HepG2 (cell line): ENCODE measurements at regions of chr5 and their contacts with region 1.

Region 1: GRCh38 chr5:177497292-177498033 is at the start of gene PDLIM7:
- DNase-seq: peak; percentile 94
- ATAC-seq: peak; percentile 77
- H3K4me3 ChIP-seq: peak within 1 kb of the TSS; percentile 65 to 85 (median 68)
- H3K27ac ChIP-seq: peak within 1 kb of the TSS; percentile 75
- H3K4me1 ChIP-seq: peaks cover 57% of the 10 kb centered on the region
- H3K27me3 ChIP-seq: peaks cover 0 to 29% of the 10 kb centered on the region in 2 experiments; a peak in 3 of 5 replicates
- CTCF ChIP-seq: peak; percentile 27; the same call in 1 of the 2 replicates
- EP300 ChIP-seq: no peak
- POLR2A ChIP-seq: peak in 1 of 2 experiments; percentile 87; a peak in 2 of 4 replicates
- RAD21 ChIP-seq: no peak
- total RNA-seq, gene PDLIM7: 17.7 and 21.1 TPM in 2 replicates

Region 2: DNA sequence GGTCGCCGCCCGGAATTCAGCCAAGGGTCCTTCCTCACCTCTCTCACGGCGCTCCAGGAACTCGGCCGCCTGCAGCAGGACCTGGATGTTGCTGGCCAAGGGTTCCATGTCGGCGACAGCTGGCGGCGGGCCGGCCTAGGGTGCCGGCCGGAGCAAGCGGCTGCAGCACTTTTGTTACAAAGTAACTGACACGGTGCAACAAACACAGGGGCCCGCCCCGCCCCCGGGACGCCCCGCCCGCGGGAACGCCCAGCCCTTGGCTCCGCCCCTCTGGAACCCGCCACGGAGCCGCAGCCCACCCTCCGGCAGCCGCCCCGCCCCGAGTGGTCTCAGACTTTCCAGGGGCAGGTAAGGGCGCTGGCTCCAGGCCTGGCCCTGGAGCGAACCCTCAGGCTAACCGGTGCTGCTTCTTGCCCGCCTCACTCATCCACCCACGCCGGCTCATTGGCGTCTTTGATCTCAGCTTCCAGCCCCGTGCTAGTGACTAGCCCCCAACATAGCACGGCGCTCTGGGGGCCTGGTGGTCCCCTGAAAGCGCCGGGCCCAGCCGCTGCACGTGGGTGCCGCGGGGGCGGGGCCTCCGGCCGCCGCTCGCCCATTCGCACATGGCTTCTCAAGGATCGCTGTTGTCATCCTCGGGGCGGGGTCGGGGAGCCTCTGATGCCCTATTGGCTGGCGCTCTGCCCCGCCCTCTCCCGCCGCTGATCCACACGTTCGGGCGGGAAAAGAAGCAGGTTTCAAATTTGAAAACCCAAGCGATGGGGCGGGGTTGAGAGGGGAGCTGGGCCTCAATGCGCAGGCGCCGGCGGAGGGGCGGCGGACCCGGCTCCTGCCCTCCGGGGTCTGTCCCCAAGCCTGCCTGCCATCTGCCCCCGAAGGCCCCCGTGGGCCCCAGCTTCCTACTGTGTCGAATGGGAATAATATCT is 185.5 kb before region 1 on chr5 and contains the start of gene MXD3:
- CTCF ChIA-PET with region 1: no interaction called
- POLR2A ChIA-PET with region 1: interaction called, 3 read pairs
- in situ Hi-C with region 1: no loop called
- intact Hi-C with region 1: loop called (anchors 5 kb)
- DNase-seq: peak; percentile 94
- ATAC-seq: peak; percentile 71
- H3K4me3 ChIP-seq: peak within 1 kb of the TSS; percentile 63 to 79 (median 75)
- H3K27ac ChIP-seq: peak within 1 kb of the TSS; percentile 95
- H3K4me1 ChIP-seq: peaks cover 51% of the 10 kb centered on the region
- H3K27me3 ChIP-seq: no peaks in the 10 kb centered on the region
- CTCF ChIP-seq: no peak
- EP300 ChIP-seq: peak in 1 of 2 experiments; percentile 34; a peak in 1 of 4 replicates
- POLR2A ChIP-seq: peak in 1 of 2 experiments; percentile 46; a peak in 1 of 4 replicates
- RAD21 ChIP-seq: no peak
- total RNA-seq, gene MXD3: 9.9 and 12.8 TPM in 2 replicates

Region 3: GRCh38 chr5:177390363-177391300 is 106.8 kb before region 1 on chr5:
- CTCF ChIA-PET with region 1: interaction called, 9 read pairs
- POLR2A ChIA-PET with region 1: interaction called, 7 read pairs
- in situ Hi-C with region 1: no loop called
- intact Hi-C with region 1: loop called (anchors 1 kb)
- DNase-seq: peak; percentile 79
- ATAC-seq: peak; percentile 79
- H3K4me3 ChIP-seq: no peak overlapping the region; a peak in 1 of 6 replicates
- H3K27ac ChIP-seq: no peak overlapping the region
- H3K4me1 ChIP-seq: peaks cover 38% of the 10 kb centered on the region
- H3K27me3 ChIP-seq: peaks cover 4 to 47% of the 10 kb centered on the region in 2 experiments; a peak in 4 of 5 replicates
- CTCF ChIP-seq: peak; percentile 96
- EP300 ChIP-seq: no peak
- POLR2A ChIP-seq: no peak
- RAD21 ChIP-seq: peak; percentile 94

Region 4: DNA sequence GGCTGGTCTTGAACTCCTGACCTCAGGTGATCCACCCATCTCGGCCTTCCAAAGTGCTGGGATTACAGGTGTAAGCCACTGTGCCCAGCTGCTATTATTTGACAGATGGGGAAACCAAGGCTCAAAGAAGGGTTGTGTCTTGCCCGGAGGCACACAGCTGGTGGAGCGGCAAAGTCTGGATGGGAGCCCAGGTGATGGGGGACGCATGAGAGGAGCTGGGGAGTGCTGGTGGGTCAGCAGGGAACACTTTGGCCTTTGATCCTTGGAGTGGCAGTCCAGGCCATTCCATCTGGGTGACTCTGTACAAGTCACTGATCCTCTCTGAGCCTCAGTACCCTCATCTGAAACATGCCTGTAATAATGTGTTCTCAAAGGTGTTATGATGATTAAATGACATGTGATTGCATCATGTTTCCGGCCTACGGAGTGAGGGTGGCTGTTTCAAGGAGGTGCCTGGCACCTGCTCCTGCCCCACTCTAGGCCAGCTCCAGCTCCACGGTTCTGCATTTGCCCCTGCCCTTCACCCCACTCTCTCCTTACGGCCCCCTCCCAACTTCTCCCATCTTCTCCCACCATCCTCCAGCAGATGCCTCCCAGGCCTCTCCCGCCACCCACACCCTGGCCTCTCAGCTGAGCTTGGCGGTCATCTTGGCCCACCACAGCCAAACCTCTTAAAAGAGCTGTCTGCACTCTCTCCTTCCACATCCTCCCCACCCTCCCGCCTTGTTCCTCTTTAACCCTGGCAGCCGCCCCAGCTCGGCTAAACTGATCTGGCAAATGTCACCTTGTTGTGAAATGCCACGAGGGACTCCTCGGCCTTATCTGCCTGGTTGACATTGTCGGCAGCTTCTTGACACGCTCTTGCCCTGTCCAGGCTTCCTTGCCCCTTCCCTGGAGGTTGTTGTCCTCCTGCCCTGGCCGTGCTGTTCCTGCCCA is 18.5 kb before region 1 on chr5:
- CTCF ChIA-PET with region 1: no interaction called
- POLR2A ChIA-PET with region 1: interaction called, 42 read pairs
- in situ Hi-C with region 1: no loop called
- intact Hi-C with region 1: no loop called
- DNase-seq: no peak
- ATAC-seq: peak; percentile 5; the same call in 1 of the 3 replicates
- H3K4me3 ChIP-seq: no peak overlapping the region
- H3K27ac ChIP-seq: no peak overlapping the region
- H3K4me1 ChIP-seq: peaks cover 54% of the 10 kb centered on the region
- H3K27me3 ChIP-seq: no peaks in the 10 kb centered on the region
- CTCF ChIP-seq: no peak
- EP300 ChIP-seq: no peak
- POLR2A ChIP-seq: no peak
- RAD21 ChIP-seq: no peak

Region 5: GRCh38 chr5:177516604-177517568 is 19.4 kb after region 1 on chr5 and contains the start of gene DDX41:
- CTCF ChIA-PET with region 1: no interaction called
- POLR2A ChIA-PET with region 1: interaction called, 18 read pairs
- in situ Hi-C with region 1: no loop called
- intact Hi-C with region 1: no loop called
- DNase-seq: peak; percentile 96
- ATAC-seq: peak; percentile 88
- H3K4me3 ChIP-seq: peak within 1 kb of the TSS; percentile 70 to 96 (median 86)
- H3K27ac ChIP-seq: peak within 1 kb of the TSS; percentile 62
- H3K4me1 ChIP-seq: peaks cover 26% of the 10 kb centered on the region
- H3K27me3 ChIP-seq: no peaks in the 10 kb centered on the region; a peak in 1 of 5 replicates
- CTCF ChIP-seq: peak; percentile 21; the same call in 1 of the 2 replicates
- EP300 ChIP-seq: peak in 1 of 2 experiments; percentile 17; a peak in 1 of 4 replicates
- POLR2A ChIP-seq: peak in 1 of 2 experiments; percentile 48; a peak in 1 of 4 replicates
- RAD21 ChIP-seq: peak; percentile 48; the same call in 1 of the 2 replicates
- total RNA-seq, gene DDX41: 62.8 and 83.0 TPM in 2 replicates

Region 6: DNA sequence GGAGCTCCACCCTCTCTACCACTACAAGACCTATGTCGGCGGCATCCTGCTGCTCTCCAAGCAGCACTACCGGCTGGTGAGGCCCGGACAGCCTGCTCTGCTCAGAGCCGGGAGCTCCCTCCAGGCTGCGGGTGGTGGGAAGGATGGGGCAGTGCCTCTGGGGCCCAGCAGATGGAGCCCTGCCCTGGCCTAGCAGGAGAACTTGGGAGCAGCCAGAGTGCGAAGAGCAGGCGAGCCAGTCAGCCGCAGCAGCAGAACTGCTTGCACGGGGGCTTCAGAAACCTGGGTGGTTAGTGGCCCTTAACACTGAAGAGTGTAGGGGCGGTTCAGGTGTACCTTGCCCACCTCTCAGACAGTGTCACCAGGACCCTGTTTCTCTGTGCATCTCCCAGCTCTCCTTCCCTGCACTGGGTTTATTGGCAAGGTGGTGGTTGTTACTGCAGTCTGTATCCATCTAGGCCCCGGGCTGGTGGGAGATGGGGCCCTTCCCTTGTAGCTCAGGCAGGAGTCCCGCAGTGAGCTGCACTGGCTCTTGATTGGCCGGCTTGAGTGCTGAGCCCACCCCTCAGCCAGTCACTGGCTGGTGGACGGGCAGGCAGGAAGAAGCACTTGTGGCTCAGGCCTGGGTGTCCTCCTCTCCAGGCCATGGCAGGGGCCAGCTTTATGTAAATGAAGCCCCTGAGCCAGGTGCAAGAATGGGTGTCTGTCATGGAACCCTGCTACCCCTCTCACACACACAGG is 110.2 kb after region 1 on chr5:
- CTCF ChIA-PET with region 1: no interaction called
- POLR2A ChIA-PET with region 1: no interaction called
- in situ Hi-C with region 1: no loop called
- intact Hi-C with region 1: no loop called
- DNase-seq: peak; percentile 58
- ATAC-seq: peak; percentile 94
- H3K4me3 ChIP-seq: no peak overlapping the region
- H3K27ac ChIP-seq: no peak overlapping the region
- H3K4me1 ChIP-seq: peaks cover 9% of the 10 kb centered on the region
- H3K27me3 ChIP-seq: no peaks in the 10 kb centered on the region
- CTCF ChIP-seq: peak; percentile 98
- EP300 ChIP-seq: no peak
- POLR2A ChIP-seq: no peak
- RAD21 ChIP-seq: peak; percentile 87